ENCODE measurements at regions of chr7 and their contacts with region 1.

Region 1: GRCh38 chr7:105759670-105760550 is 116.5 kb downstream of the ATXN7L1 start:
- DNase-seq: peak; percentile 61
- ATAC-seq: peak; percentile 72

Region 2: GRCh38 chr7:105387621-105388372 is 372.1 kb before region 1 on chr7:
- intact Hi-C with region 1: no loop called
- DNase-seq: peak; percentile 66
- ATAC-seq: peak; percentile 77

Region 3: DNA sequence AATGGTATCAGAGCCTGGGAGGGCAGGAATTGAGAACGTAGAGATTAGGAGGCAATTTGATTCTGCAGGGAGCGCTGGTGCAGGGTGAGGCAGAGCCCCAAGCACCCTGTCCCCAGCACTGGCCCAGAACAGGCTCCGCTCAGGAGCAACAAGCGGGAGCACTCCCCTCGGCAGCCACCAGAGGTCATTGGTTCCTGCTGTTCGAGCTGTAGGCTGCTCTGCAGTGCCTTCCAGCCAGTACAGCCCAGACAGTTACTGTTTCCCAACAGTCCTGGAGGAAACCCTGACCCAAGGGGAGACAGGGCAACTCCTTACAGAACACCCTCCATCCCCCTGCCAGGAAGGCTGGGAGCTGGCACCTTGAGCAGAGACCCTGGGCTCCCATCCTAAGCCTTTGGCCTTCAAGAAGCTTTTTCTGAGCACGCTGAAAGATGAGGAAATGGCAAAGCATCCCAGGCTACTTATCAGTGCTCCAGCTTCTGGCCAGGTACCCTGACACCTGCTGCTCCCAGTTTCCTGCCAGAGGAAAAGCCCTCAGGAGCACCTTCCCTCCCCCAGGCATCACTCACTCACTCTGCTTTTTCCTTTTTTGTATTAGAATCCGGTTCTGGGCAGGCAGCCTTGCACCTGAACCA is 107.4 kb before region 1 on chr7:
- intact Hi-C with region 1: loop called (anchors 10 kb)
- DNase-seq: peak; percentile 85
- ATAC-seq: peak; percentile 94

Region 4: DNA sequence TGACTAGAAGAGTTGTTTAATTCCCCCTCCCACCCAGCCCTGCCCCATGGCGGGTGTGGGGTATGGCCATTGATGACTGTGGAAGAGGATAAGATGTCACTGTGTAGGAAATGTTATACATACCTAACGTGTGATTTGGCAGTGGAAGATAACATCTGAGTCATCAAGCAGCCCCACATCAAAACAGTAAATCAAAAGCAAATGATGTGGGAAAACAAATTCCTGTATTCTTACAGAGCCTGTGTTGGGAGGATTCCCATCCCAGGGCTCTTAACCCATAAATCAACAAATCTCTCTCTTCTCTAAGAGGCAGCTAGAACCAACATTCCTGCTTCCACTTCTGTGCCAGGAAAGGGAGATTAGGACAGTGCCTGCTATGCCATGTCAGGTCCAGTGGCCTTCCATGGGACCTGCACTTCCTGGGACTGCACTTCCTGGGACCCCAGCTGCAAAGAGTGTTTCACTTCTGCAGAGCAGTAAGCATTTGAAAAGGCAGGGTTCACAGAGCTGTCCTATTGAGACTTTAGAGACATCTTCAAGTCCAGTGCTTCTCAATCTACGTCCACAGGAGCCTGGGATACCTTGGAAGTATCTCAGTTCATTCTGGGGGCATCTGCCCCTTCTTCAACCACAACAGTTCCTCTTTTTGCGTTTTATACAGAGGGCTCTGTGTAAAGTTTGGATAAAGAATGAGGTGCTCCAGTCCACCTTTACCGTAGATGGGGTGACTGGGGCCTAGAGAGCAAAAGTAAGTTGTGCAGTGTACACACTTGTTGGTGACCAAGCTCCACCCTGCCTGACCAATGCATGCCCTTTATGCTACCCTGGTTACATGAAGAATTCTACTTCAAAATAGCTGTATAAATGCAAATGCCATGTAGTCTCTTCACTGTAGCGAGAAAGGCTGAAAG is 70.7 kb after region 1 on chr7:
- intact Hi-C with region 1: no loop called
- DNase-seq: no peak
- ATAC-seq: no peak

Region 5: GRCh38 chr7:106041140-106041717 is 281.3 kb after region 1 on chr7:
- intact Hi-C with region 1: loop called (anchors 10 kb)
- DNase-seq: no peak
- ATAC-seq: peak; percentile 20

Measured in left ventricle myocardium superior (tissue), 1 donor.